ENCODE measurements at regions of chr4 and their contacts with region 1.

Region 1: GRCh38 chr4:88177961-88178625 is 19.7 kb upstream of the ABCG2 start:
- DNase-seq: peak; percentile 61 to 85
- H3K4me3 ChIP-seq: no peak overlapping the region; the same call in 1 of the 2 replicates
- H3K27ac ChIP-seq: peak overlapping the region; percentile 90
- H3K4me1 ChIP-seq: peaks cover 22% of the 10 kb centered on the region
- H3K27me3 ChIP-seq: no peaks in the 10 kb centered on the region
- CTCF ChIP-seq: no peak

Region 2: DNA sequence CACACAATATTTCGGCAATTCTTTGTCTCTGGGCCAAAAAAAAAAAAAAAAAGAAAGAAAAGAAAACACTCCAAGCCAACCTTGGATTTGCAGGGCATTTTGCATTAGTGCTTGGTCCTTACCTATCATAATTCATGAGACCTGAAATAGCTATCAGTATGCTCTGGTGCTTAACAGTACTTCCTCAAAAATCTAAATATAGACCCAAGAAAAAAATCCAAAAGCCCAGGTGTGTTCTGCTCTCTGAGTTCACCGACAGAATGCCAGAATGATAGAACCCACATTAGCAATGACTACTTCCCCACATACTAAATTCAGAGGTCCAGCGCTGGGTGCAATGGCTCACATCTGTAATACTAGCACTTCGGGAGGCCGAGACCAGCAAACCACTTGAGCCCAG is 62.5 kb before region 1 on chr4:
- CTCF ChIA-PET with region 1: interaction called, 13 read pairs
- POLR2A ChIA-PET with region 1: no interaction called
- intact Hi-C with region 1: no loop called
- DNase-seq: no peak
- H3K4me3 ChIP-seq: no peak overlapping the region
- H3K27ac ChIP-seq: no peak overlapping the region
- H3K4me1 ChIP-seq: no peaks in the 10 kb centered on the region
- H3K27me3 ChIP-seq: no peaks in the 10 kb centered on the region
- CTCF ChIP-seq: no peak

Region 3: GRCh38 chr4:88610771-88611170 is 432.7 kb after region 1 on chr4:
- CTCF ChIA-PET with region 1: no interaction called
- POLR2A ChIA-PET with region 1: no interaction called
- intact Hi-C with region 1: no loop called
- DNase-seq: no peak
- H3K4me3 ChIP-seq: no peak overlapping the region
- H3K27ac ChIP-seq: peak overlapping the region; percentile 99
- H3K4me1 ChIP-seq: peaks cover 47% of the 10 kb centered on the region
- H3K27me3 ChIP-seq: no peaks in the 10 kb centered on the region
- CTCF ChIP-seq: no peak

Measured in PC-9 (cell line).